Activated CD8-positive, alpha-beta T cell treated with anti-CD3 and anti-CD28 coated beads for 36 hours (primary cell): ENCODE measurements at regions of chr4 and their contacts with region 1.

Region 1: DNA sequence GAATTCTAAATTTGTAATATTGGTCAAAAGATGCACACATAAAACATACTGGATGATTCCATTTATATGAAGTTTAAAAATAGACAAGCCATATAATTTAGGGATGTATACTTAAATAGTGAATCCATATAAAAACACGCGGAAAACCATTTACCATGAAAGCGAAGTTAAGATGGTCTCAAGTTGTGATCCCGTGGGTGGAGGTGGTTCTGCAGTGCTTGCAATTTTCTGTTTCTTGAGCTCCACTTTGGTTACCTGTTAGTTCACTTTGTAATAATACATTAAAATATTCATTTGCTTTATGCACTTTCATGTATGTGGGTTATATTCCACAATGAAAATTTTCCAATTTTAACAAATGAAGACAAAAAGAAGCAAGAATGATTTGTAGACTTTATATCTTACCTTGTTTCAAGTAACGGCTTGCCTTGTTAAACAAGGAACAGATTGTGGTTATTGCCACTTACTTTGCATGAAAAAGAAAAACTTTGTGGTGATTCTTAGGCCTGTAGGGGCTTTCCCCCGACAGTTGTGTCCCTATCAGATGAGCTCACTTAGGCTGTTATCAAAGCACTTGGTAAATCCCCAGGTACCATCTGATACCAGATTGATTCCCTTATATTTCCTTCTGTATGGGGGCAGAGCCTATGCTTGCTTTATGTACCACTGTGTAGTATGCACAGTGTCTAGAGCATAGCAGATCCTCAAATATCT is 12.2 kb downstream of the UCP1 start:
- DNase-seq: peak; percentile 56
- ATAC-seq: peak; percentile 100
- H3K4me3 Mint-ChIP-seq: no peak overlapping the region
- H3K27ac Mint-ChIP-seq: no peak overlapping the region
- H3K4me1 Mint-ChIP-seq: peaks cover 19% of the 10 kb centered on the region
- H3K27me3 Mint-ChIP-seq: peaks cover 15% of the 10 kb centered on the region
- CTCF ChIP-seq: no peak

Region 2: DNA sequence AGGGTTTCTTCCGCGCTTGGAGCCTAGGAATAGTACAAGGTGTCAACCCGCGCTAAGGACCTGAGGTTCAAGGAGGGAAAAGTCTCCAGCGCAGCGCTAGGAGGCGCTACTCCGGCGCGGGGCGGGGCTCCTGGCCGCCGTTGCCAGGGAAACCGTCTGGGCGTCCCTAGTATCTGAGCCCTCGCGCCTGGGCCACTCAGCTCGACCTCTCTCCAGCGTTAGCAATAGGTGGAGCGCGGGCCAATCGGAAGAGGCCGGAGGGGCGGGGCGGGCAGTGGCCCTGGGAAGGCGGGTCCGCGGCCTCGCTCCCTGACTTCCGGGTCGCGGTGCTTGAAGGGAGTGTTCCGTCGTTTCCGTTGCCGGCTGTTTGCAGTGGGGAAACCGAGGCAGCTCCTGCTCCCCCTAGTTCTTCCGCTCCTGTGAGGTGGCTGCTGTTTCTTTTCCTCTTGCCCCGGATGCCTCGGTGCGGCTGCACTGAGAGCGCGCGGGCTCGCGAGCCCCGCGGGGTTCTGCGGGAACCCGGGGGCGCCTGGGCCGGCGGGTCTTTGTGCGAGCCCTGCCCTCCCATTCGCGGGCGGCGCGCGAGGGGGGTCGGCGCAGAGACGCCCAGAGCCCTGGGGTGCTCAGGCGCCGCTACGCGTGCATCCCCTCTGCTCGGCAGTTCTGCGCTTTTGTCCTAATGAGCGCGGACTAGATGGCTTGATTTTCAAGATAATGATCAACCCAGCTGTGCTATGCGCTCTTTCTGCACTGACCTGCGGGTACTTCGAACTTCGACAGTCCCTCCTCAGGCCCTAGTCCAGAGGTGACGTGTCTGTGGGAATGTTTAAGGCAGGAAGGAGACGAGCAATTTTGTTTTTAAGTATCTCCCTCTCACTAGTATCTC is 32.4 kb before region 1 on chr4 and contains the start of gene ELMOD2:
- CTCF ChIA-PET with region 1: interaction called, 12 read pairs
- POLR2A ChIA-PET with region 1: no interaction called
- intact Hi-C with region 1: no loop called
- DNase-seq: peak; percentile 99
- ATAC-seq: peak; percentile 100
- H3K4me3 Mint-ChIP-seq: peak within 1 kb of the TSS; percentile 91
- H3K27ac Mint-ChIP-seq: peak within 1 kb of the TSS; percentile 82
- H3K4me1 Mint-ChIP-seq: peaks cover 15% of the 10 kb centered on the region
- H3K27me3 Mint-ChIP-seq: no peaks in the 10 kb centered on the region
- CTCF ChIP-seq: peak; percentile 91
- total RNA-seq, gene ELMOD2: 11.9 to 15.8 TPM

Region 3: DNA sequence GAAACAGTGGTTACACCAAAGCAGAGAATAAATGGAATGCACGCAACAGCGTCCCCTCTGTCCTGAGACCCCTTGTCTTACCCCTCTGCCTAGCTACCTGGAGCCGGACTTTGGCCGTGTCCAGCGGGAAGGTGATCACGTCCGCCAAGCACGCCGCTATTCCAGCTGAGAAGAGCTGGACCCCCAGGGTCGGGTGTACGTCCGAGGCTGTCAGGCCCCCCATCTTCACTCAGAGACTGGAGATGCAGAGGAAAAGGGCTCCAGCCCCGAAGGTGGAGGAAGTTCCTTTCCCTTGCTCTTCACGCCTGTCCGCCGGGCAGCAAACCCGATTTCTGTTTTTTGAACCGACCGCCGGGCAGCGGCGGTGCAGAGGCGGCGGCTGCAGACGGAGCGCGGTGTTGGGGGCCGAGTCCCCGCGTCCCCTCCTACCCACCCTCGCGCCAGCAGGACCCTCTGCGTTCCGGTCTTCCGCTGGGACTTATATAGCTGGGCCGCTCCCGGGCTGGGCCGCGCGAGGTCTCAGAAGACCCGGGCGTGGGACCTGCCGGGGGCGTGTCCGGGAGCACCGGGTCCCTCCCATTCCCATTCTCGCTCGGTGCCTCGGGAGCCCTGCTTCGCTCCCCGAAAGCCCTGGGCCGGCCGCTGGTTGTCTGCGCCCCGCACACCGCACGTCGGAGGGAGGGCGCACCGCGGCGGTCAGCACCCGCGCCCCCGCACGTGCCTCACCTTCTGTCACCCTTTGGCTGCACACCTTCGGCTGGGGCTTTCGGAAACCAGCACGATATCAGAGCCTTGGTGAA is 12.2 kb after region 1 on chr4 and contains the start of gene UCP1:
- CTCF ChIA-PET with region 1: no interaction called
- POLR2A ChIA-PET with region 1: no interaction called
- intact Hi-C with region 1: no loop called
- DNase-seq: peak; percentile 7
- ATAC-seq: no peak
- H3K4me3 Mint-ChIP-seq: peak within 1 kb of the TSS; percentile 58
- H3K27ac Mint-ChIP-seq: no peak within 1 kb of the TSS
- H3K4me1 Mint-ChIP-seq: peaks cover 10% of the 10 kb centered on the region
- H3K27me3 Mint-ChIP-seq: peaks cover 57% of the 10 kb centered on the region
- CTCF ChIP-seq: no peak
- total RNA-seq, gene UCP1: not detected